ENCODE measurements at regions of chr10 and their contacts with region 1.

Region 1: DNA sequence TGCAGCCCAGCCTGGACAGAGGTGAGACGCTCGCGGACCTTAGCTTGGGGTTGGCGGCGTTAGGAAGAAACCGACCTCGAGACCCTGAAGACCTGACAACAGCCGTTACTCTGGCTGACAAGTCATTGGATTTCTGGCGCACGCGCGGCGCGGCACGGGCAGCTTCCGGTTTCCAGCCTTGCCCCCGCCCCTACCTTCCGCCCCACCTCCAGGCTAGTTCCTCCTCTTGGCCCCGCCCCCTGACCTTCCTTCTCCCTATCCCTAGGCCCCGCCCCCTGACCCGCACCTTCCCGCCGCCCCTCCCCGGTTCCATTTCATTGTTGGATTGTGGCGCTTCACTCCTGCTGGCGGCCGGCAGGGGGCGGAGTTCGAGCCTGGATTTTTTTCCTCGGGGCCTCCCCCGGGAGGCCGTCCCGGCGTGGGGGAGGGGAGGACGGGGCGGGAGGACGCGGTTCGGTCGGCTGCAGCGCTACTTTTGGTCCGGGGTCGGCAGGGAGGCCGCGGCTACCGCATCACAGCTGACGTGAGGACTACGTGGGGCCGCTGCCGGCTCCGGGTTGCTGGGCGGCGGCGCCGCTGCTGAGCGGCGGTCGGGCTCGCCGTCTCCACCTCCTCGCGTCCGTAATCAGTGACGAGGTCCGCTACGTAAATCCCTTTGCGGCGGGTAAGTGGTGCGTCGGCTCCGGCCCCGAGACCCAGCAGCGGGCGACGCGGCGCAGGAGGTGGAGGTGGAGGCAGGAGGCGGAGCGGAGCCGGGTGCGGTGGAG is at the start of gene CREM:
- DNase-seq: peak; percentile 98 to 99
- ATAC-seq: peak; percentile 81 to 94 (median 83)
- H3K4me3 ChIP-seq: peak within 1 kb of the TSS; percentile 98
- H3K4me3 Mint-ChIP-seq: peak within 1 kb of the TSS; percentile 93
- H3K27ac ChIP-seq: peak within 1 kb of the TSS; percentile 98
- H3K27ac Mint-ChIP-seq: peak within 1 kb of the TSS; percentile 97 to 98
- H3K4me1 ChIP-seq: peaks cover 21% of the 10 kb centered on the region
- H3K4me1 Mint-ChIP-seq: peaks cover 24% of the 10 kb centered on the region in 2 donors
- H3K27me3 ChIP-seq: no peaks in the 10 kb centered on the region
- H3K27me3 Mint-ChIP-seq: no peaks in the 10 kb centered on the region
- CTCF ChIP-seq: peak; percentile 72
- total RNA-seq, gene CREM: 48.0 to 64.3 (median 54.6) TPM

Region 2: GRCh38 chr10:34801097-34801733 is 325.5 kb before region 1 on chr10:
- intact Hi-C with region 1: no loop called
- DNase-seq: no peak
- ATAC-seq: no peak
- H3K4me3 ChIP-seq: no peak overlapping the region
- H3K4me3 Mint-ChIP-seq: no peak overlapping the region
- H3K27ac ChIP-seq: no peak overlapping the region
- H3K27ac Mint-ChIP-seq: no peak overlapping the region
- H3K4me1 ChIP-seq: no peaks in the 10 kb centered on the region
- H3K4me1 Mint-ChIP-seq: no peaks in the 10 kb centered on the region
- H3K27me3 ChIP-seq: no peaks in the 10 kb centered on the region
- H3K27me3 Mint-ChIP-seq: peaks cover 5 to 7% of the 10 kb centered on the region in 2 donors
- CTCF ChIP-seq: no peak

Region 3: DNA sequence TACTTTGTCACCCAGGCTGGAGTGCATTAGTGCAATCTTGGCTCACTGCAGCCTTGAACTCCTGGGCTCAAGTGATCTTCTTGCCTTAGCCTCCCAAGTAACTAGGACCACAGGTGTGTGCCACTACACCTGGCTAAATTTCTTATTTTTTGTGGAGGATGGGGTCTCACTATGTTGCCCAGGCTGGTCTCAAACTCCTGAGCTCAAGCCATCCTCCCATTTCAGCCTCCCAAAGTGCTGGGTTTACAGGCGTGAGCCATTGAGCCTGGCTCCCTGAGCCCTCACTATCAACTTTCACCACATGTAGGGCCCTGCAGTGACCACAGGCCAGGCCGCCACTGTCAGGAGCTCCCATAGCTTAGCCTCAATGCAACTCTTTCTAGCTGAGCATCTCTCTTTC is 146.8 kb before region 1 on chr10:
- intact Hi-C with region 1: no loop called
- DNase-seq: no peak
- ATAC-seq: no peak
- H3K4me3 ChIP-seq: no peak overlapping the region
- H3K4me3 Mint-ChIP-seq: no peak overlapping the region
- H3K27ac ChIP-seq: no peak overlapping the region
- H3K27ac Mint-ChIP-seq: no peak overlapping the region
- H3K4me1 ChIP-seq: no peaks in the 10 kb centered on the region
- H3K4me1 Mint-ChIP-seq: peaks cover 0 to 8% of the 10 kb centered on the region in 2 donors
- H3K27me3 ChIP-seq: no peaks in the 10 kb centered on the region
- H3K27me3 Mint-ChIP-seq: no peaks in the 10 kb centered on the region
- CTCF ChIP-seq: no peak

Region 4: GRCh38 chr10:35090162-35090954 is 36.4 kb before region 1 on chr10 and contains the start of gene CUL2:
- intact Hi-C with region 1: loop called (anchors 1 kb)
- DNase-seq: peak; percentile 94 to 96
- ATAC-seq: peak; percentile 94 to 96 (median 94)
- H3K4me3 ChIP-seq: peak within 1 kb of the TSS; percentile 70
- H3K4me3 Mint-ChIP-seq: peak within 1 kb of the TSS; percentile 92
- H3K27ac ChIP-seq: peak within 1 kb of the TSS; percentile 97
- H3K27ac Mint-ChIP-seq: peak within 1 kb of the TSS; percentile 87 to 97
- H3K4me1 ChIP-seq: peaks cover 21% of the 10 kb centered on the region
- H3K4me1 Mint-ChIP-seq: peaks cover 50 to 52% of the 10 kb centered on the region in 2 donors
- H3K27me3 ChIP-seq: no peaks in the 10 kb centered on the region
- H3K27me3 Mint-ChIP-seq: peaks cover 0 to 7% of the 10 kb centered on the region in 2 donors
- CTCF ChIP-seq: no peak
- total RNA-seq, gene CUL2: 33.5 to 41.6 (median 41.3) TPM

Region 5: GRCh38 chr10:35195361-35196306 is 68.9 kb after region 1 on chr10:
- intact Hi-C with region 1: loop called (anchors 1 kb)
- DNase-seq: peak; percentile 63 to 97
- ATAC-seq: peak; percentile 82 to 94 (median 84)
- H3K4me3 ChIP-seq: peak overlapping the region; percentile 43
- H3K4me3 Mint-ChIP-seq: peak overlapping the region; percentile 94
- H3K27ac ChIP-seq: peak overlapping the region; percentile 92
- H3K27ac Mint-ChIP-seq: peak overlapping the region; percentile 96 to 98
- H3K4me1 ChIP-seq: peaks cover 16% of the 10 kb centered on the region
- H3K4me1 Mint-ChIP-seq: peaks cover 19 to 42% of the 10 kb centered on the region in 2 donors
- H3K27me3 ChIP-seq: no peaks in the 10 kb centered on the region
- H3K27me3 Mint-ChIP-seq: no peaks in the 10 kb centered on the region
- CTCF ChIP-seq: peak; percentile 88

Region 6: GRCh38 chr10:35336084-35336831 is 209.5 kb after region 1 on chr10 and contains the start of gene CCNY:
- intact Hi-C with region 1: loop called (anchors 1 kb)
- DNase-seq: peak; percentile 69 to 82
- ATAC-seq: peak; percentile 81 to 92 (median 84)
- H3K4me3 ChIP-seq: peak within 1 kb of the TSS; percentile 73
- H3K4me3 Mint-ChIP-seq: peak within 1 kb of the TSS; percentile 98
- H3K27ac ChIP-seq: peak within 1 kb of the TSS; percentile 54
- H3K27ac Mint-ChIP-seq: peak within 1 kb of the TSS; percentile 87 to 92
- H3K4me1 ChIP-seq: peaks cover 20% of the 10 kb centered on the region
- H3K4me1 Mint-ChIP-seq: peaks cover 61 to 71% of the 10 kb centered on the region in 2 donors
- H3K27me3 ChIP-seq: no peaks in the 10 kb centered on the region
- H3K27me3 Mint-ChIP-seq: no peaks in the 10 kb centered on the region
- CTCF ChIP-seq: no peak
- total RNA-seq, gene CCNY: 71.0 to 87.2 (median 74.3) TPM

Region 7: GRCh38 chr10:35642027-35642792 is 515.5 kb after region 1 on chr10 and contains the start of gene FZD8:
- intact Hi-C with region 1: loop called (anchors 10 kb)
- DNase-seq: peak; percentile 64 to 81
- ATAC-seq: peak; percentile 86 to 88 (median 86)
- H3K4me3 ChIP-seq: peak within 1 kb of the TSS; percentile 34
- H3K4me3 Mint-ChIP-seq: peak within 1 kb of the TSS; percentile 87
- H3K27ac ChIP-seq: no peak within 1 kb of the TSS
- H3K27ac Mint-ChIP-seq: peak within 1 kb of the TSS in 1 of 2 donors; percentile 68
- H3K4me1 ChIP-seq: peaks cover 35% of the 10 kb centered on the region
- H3K4me1 Mint-ChIP-seq: peaks cover 26 to 33% of the 10 kb centered on the region in 2 donors
- H3K27me3 ChIP-seq: peaks cover 8% of the 10 kb centered on the region
- H3K27me3 Mint-ChIP-seq: peaks cover 25% of the 10 kb centered on the region in 2 donors
- CTCF ChIP-seq: no peak
- total RNA-seq, gene FZD8: 0.85 to 1.4 (median 1.4) TPM